Activated CD8-positive, alpha-beta T cell treated with anti-CD3 and anti-CD28 coated beads, Interleukin-2, amount 10 ng/mL, durations not matched to agents 7 days and 5 days (primary cell): ENCODE measurements at regions of chr12 and their contacts with region 1.

Region 1: GRCh38 chr12:1795785-1796514 is 24.4 kb upstream of the LRTM2 start:
- DNase-seq: peak; percentile 94
- ATAC-seq: peak; percentile 97
- H3K4me3 Mint-ChIP-seq: peak overlapping the region; percentile 86
- H3K27ac Mint-ChIP-seq: peak overlapping the region; percentile 90
- H3K4me1 Mint-ChIP-seq: peaks cover 26% of the 10 kb centered on the region
- H3K27me3 Mint-ChIP-seq: no peaks in the 10 kb centered on the region

Region 2: GRCh38 chr12:1500095-1500801 is 295.7 kb before region 1 on chr12:
- CTCF ChIA-PET with region 1: no interaction called
- POLR2A ChIA-PET with region 1: no interaction called
- DNase-seq: no peak
- ATAC-seq: no peak
- H3K4me3 Mint-ChIP-seq: no peak overlapping the region
- H3K27ac Mint-ChIP-seq: no peak overlapping the region
- H3K4me1 Mint-ChIP-seq: peaks cover 13% of the 10 kb centered on the region
- H3K27me3 Mint-ChIP-seq: peaks cover 22% of the 10 kb centered on the region

Region 3: DNA sequence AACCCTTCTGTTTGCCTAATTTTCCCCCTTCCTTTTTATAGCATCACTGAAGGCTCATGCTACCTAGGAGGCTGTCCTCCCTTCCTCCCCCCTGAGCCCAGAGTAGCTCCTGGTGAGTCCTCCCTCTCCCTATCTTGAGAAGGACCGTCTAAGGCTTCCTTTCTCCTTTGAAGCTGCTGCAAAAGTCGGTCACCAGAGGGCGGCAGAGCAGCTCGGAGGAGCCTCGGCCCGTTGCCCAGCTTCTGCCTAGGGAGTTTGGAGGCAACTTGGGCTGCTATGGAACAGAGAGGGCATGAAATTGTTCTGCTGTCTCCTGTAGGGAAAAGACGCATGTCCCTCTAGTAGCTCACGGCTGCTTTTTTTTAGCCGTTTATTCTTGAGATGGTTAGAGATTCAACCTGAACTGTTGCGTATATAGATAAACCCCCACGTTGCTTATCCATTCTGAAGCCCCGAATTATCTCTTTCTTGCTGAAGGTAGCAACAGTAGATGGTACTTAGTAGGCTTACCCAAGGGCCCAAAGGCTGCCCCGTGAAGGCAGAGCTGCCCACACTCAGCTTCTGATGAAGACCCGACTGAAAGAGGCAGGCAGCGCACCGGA is 161.3 kb before region 1 on chr12:
- CTCF ChIA-PET with region 1: interaction called, 116 read pairs
- POLR2A ChIA-PET with region 1: no interaction called
- DNase-seq: peak; percentile 72
- ATAC-seq: peak; percentile 68
- H3K4me3 Mint-ChIP-seq: no peak overlapping the region
- H3K27ac Mint-ChIP-seq: no peak overlapping the region
- H3K4me1 Mint-ChIP-seq: peaks cover 8% of the 10 kb centered on the region
- H3K27me3 Mint-ChIP-seq: peaks cover 52% of the 10 kb centered on the region

Region 4: DNA sequence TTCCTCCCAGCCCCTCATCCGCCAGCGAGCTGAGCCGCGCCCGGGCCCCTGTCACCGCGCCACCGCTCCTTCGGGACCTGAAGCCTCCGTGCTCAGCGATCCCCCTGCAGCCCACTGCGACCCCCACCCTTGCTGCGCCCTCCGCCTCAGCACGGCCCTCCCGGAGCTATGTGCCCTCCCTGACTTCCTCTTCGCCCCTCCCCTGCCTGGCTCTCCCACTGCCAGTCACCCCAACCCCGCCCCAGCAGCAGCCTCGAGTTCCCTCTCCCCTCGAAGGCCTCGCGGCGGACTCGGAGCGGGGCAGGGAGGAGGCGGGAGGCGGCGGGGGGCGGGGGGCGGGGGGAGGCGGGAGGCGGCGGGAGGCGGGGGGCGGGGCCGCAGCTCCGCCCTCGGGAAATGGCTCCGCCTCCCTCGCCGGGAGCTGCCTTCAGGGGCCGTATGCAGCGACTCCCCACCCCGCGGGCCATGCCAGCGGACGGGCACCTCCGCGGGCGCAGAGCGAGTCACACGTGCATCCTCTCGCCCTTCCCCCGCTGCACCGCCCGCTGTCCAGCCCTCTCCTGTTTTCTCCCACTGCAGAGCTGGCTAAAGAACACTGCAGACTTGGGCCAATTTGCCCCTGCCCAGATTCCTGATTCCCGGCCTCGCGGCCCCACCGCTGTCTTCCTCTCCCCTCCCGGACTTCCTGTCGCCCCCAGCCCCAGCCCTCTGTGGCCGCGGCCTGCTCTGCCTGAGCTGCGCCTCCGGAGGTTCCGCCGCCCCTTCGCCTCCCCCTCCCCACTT is 134.2 kb before region 1 on chr12:
- CTCF ChIA-PET with region 1: interaction called, 491 read pairs
- POLR2A ChIA-PET with region 1: interaction called, 9 read pairs
- DNase-seq: peak; percentile 92
- ATAC-seq: peak; percentile 92
- H3K4me3 Mint-ChIP-seq: peak overlapping the region; percentile 63
- H3K27ac Mint-ChIP-seq: peak overlapping the region; percentile 88
- H3K4me1 Mint-ChIP-seq: peaks cover 44% of the 10 kb centered on the region
- H3K27me3 Mint-ChIP-seq: no peaks in the 10 kb centered on the region

Region 5: DNA sequence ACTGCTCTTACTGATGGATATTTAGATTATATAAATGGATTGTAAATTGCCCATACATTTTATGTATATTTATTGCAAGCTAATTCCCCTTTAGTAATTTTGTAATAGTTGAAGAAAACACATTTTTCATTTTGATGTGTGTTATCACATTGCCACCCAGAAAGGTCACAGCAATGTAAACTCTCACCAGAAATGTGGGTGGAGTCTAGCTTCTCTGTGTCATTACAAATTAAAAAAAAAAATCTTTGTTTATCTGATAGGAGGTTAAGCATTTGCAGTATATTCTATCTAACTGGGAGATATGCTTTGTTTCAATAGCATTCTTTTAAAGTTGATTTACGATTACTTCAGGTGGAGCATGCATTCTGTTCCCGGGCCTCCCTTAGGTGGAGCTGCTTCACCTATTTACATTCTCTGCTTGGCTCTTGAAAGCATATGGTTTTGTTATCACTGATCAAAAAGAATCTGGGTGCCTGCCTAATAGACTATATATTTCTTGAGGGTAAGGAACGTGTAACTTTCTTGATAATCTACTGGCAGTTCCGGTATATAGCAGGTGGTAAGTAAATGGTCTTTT is 97.2 kb before region 1 on chr12:
- CTCF ChIA-PET with region 1: interaction called, 21 read pairs
- POLR2A ChIA-PET with region 1: no interaction called
- DNase-seq: no peak
- ATAC-seq: no peak
- H3K4me3 Mint-ChIP-seq: no peak overlapping the region
- H3K27ac Mint-ChIP-seq: no peak overlapping the region
- H3K4me1 Mint-ChIP-seq: peaks cover 29% of the 10 kb centered on the region
- H3K27me3 Mint-ChIP-seq: no peaks in the 10 kb centered on the region

Region 6: DNA sequence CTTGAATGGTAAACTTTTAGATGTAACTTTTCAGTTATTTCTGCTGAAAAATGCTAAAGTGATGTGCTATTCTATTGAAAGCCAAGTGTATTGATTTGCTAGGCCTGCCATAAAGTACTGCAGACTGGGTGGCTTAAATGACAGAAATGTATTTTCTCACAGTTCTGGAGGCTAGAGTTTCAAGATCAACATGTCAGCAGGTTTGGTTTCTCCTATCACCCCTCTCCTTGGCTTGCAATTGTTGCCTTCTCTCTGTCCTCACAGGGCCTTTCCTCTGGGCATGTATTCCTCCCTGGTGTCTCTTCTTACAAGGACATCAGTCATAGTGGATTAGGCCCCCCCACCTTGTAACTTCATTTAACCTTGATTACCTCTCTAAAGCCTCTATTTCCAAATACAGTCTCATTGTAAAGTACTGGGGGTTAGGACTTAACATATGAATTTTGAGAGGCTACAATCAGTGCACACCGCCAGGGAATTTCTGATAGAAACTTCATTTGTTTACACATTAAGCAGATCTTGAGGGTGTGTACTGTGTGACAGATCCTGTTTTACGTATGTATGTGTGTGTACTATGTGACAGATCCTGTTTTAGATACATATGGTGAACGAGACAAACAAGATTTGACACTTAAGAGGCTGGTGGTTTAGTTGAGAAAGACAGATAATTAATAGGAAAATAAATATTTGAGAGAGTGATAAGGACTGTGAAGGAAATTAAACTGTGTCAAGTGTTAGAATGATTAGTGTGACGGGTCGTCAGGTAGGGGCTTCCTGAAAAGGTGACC is 55.6 kb before region 1 on chr12:
- CTCF ChIA-PET with region 1: no interaction called
- POLR2A ChIA-PET with region 1: no interaction called
- DNase-seq: no peak
- ATAC-seq: no peak
- H3K4me3 Mint-ChIP-seq: no peak overlapping the region
- H3K27ac Mint-ChIP-seq: no peak overlapping the region
- H3K4me1 Mint-ChIP-seq: peaks cover 4% of the 10 kb centered on the region
- H3K27me3 Mint-ChIP-seq: no peaks in the 10 kb centered on the region

Region 7: GRCh38 chr12:1773937-1774655 is 21.9 kb before region 1 on chr12:
- CTCF ChIA-PET with region 1: interaction called, 10 read pairs
- POLR2A ChIA-PET with region 1: interaction called, 3 read pairs
- DNase-seq: no peak
- ATAC-seq: no peak
- H3K4me3 Mint-ChIP-seq: no peak overlapping the region
- H3K27ac Mint-ChIP-seq: no peak overlapping the region
- H3K4me1 Mint-ChIP-seq: no peaks in the 10 kb centered on the region
- H3K27me3 Mint-ChIP-seq: no peaks in the 10 kb centered on the region

Region 8: GRCh38 chr12:1812650-1813302 is 16.8 kb after region 1 on chr12:
- CTCF ChIA-PET with region 1: interaction called, 10 read pairs
- POLR2A ChIA-PET with region 1: no interaction called
- DNase-seq: no peak
- ATAC-seq: no peak
- H3K4me3 Mint-ChIP-seq: no peak overlapping the region
- H3K27ac Mint-ChIP-seq: no peak overlapping the region
- H3K4me1 Mint-ChIP-seq: peaks cover 9% of the 10 kb centered on the region
- H3K27me3 Mint-ChIP-seq: peaks cover 4% of the 10 kb centered on the region